HCT116 (cell line): ENCODE measurements at regions of chr2 and their contacts with region 1.

Region 1: GRCh38 chr2:230323385-230324106 is 3.4 kb upstream of the SP140L start:
- DNase-seq: peak; percentile 22
- ATAC-seq: peak; percentile 82
- H3K4me3 ChIP-seq: no peak overlapping the region
- H3K27ac ChIP-seq: no peak overlapping the region; the same call in 1 of the 2 replicates
- H3K4me1 ChIP-seq: peaks cover 3 to 37% of the 10 kb centered on the region in 2 experiments; a peak in 3 of 4 replicates
- H3K27me3 ChIP-seq: no peaks in the 10 kb centered on the region
- CTCF ChIP-seq: peak; percentile 40 to 92 (median 80); a peak in 4 of 6 replicates
- POLR2A ChIP-seq: no peak
- RAD21 ChIP-seq: peak; percentile 53

Region 2: DNA sequence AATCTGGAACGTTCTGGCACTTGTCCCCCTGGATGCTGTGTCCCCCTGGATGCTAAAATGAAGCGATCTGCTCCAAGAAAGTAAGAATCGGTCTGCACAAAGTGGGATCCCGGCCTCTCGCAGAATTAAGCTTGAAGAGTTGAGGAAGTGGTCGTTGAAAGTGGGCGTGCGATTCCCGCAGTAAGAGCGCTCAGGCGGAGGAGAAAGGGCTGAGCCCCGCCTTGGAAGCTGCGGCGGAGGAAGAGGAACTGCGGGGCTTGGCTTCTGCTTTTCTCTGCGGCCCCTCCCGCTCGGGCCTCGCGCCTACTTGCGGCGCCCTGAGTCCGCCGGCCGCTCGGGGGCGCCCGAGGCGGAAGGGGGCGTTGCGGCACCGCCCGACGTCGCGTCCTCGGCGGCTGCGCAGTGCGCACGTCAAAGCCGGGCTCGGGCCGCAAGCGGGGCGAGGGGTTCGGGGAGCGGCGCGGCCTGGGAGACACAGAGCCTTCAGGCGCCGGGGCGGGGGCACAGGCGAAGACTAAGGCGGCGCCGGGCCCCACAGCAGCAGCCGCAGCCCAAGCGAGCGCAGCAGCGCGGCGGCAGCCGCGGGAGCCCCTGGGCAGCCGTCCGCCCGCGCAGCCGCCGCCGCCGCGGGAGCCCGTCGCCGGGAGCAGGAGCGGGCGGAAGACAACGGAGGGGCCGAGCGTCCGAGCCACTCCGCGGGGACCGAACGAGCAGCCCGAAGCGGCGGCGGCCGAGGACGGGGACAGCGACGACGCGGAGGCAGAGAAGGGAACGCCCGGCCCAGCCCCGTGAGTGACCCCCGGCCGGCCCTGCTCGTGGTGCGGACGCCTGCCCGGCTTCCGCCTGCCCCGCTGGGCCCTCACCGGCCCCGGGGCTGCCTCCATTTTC is 389.1 kb after region 1 on chr2 and contains the start of gene CAB39:
- CTCF ChIA-PET with region 1: no interaction called
- POLR2A ChIA-PET with region 1: no interaction called
- RAD21 ChIA-PET with region 1: no interaction called
- intact Hi-C with region 1: loop called (anchors 5 kb)
- DNase-seq: peak; percentile 69
- ATAC-seq: peak; percentile 92
- H3K4me3 ChIP-seq: peak within 1 kb of the TSS; percentile 68 to 85
- H3K27ac ChIP-seq: peak within 1 kb of the TSS; percentile 77
- H3K4me1 ChIP-seq: peaks cover 15 to 33% of the 10 kb centered on the region in 2 experiments; a peak in 3 of 4 replicates
- H3K27me3 ChIP-seq: no peaks in the 10 kb centered on the region
- CTCF ChIP-seq: peak; percentile 57 to 69 (median 65); a peak in 5 of 6 replicates
- POLR2A ChIP-seq: peak; percentile 50
- RAD21 ChIP-seq: peak; percentile 57
- total RNA-seq, gene CAB39: 63.6 TPM